ENCODE measurements at regions of chr2 and their contacts with region 1.

Region 1: DNA sequence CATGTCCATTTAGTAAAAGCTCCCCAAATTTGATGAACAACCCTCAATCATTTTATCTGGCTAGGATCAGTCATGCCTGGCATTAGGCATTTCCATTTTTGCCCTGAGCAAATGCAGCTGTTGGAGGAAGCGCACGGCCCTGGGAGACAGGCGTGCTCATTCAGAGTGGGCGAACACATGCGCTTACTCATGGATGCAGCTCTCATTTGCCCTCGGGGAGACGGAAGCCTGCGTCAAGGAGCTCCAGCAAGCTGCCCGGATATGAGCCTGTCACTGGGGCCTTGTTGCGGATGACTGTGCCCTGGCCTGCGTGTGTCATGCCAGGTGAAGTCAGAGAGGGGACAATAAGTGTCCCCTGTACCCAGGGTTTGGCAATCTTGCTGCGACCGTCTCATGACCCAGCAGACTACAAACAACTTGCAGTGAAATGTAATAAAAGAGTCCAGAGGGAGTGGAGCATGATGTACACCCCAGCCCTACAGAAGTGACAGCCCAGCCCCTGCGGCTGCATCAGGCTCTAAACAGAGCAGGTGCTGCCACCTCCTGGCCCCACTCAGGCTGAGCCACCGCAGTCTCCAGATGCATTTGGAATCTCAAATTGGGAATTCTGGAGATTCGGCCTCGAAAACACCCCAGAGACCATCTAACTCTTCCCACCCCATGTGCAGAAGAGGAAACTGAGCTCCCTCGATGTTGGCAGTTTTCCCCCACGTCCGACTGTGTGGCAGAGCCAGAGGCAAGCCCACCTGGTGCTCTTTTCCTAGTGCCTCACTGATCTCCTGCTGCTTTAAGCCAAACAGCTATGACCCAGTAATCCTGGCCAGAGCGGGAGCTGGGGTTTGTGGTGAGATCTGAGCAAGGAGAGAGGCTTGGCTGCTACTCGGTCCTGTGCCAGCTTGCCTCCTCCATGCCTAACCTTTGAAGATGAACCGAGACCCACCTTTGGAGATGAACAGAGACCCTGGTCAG is 105.0 kb upstream of the ALK start:
- DNase-seq: peak; percentile 84
- H3K4me3 ChIP-seq: no peak overlapping the region
- H3K27ac ChIP-seq: no peak overlapping the region
- H3K4me1 ChIP-seq: peaks cover 45% of the 10 kb centered on the region
- H3K27me3 ChIP-seq: no peaks in the 10 kb centered on the region
- CTCF ChIP-seq: peak; percentile 92

Region 2: DNA sequence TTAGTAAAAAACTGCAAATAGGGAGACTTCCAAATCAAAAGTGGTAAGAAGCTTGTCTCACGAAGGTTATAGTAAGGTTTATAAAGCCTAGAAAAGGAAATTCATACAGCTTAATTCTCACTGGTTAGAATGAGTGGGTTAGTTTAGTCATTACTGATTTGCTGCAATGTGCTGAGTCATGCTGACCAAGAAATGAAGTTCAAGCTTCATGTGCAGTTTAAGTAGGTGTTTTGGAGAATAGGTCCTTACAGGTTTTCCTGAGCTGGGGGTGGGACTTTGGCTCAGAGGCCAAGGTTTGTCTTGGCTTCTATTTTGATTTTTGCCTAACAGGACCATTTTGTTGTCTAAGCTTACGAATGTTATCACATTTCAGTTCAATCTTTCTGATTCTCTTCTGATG is 896.1 kb before region 1 on chr2:
- CTCF ChIA-PET with region 1: no interaction called
- POLR2A ChIA-PET with region 1: no interaction called
- intact Hi-C with region 1: no loop called
- DNase-seq: peak; percentile 43
- H3K4me3 ChIP-seq: no peak overlapping the region
- H3K27ac ChIP-seq: peak overlapping the region; percentile 33
- H3K4me1 ChIP-seq: peaks cover 16% of the 10 kb centered on the region
- H3K27me3 ChIP-seq: no peaks in the 10 kb centered on the region
- CTCF ChIP-seq: no peak

Region 3: DNA sequence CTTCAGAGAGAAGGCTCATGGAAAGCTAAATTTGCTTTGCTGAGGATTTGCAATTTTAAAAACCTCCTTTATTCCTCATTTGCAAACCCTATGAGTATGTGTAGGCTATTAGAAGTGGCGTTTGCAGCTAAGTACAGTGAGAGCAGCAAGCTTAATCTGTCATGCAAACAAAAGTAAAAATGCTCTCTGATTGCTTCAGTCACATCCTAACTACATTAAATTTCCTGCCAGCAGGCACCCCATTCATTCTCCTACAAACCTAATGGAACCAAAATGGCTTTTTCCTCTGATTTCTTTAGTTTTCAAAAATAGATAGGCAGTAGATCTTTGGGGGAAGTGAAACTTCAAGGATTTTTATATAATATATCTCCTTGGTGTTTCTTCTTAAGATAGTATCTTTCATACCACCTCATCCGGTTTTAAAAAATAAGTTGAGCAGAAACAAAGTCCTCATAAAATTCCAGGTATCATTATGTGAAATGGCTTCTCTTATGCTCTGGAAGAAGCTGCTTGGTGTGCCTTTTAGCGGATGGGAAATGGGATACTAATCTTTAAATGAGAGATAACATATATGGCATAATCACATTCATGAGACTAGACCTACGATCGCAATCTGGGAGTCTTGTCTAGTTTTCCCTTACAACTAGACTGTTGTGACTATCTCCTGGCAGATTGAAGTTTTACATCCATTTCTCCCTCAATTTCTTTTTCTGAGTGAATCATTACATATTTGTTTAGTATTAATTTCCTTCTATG is 862.1 kb before region 1 on chr2:
- CTCF ChIA-PET with region 1: no interaction called
- POLR2A ChIA-PET with region 1: no interaction called
- intact Hi-C with region 1: loop called (anchors 5 kb)
- DNase-seq: peak; percentile 79
- H3K4me3 ChIP-seq: no peak overlapping the region
- H3K27ac ChIP-seq: peak overlapping the region; percentile 39
- H3K4me1 ChIP-seq: peaks cover 44% of the 10 kb centered on the region
- H3K27me3 ChIP-seq: no peaks in the 10 kb centered on the region
- CTCF ChIP-seq: no peak

Region 4: GRCh38 chr2:29295857-29296256 is 730.5 kb before region 1 on chr2:
- CTCF ChIA-PET with region 1: no interaction called
- POLR2A ChIA-PET with region 1: no interaction called
- intact Hi-C with region 1: loop called (anchors 10 kb)
- DNase-seq: peak; percentile 61
- H3K4me3 ChIP-seq: no peak overlapping the region
- H3K27ac ChIP-seq: no peak overlapping the region
- H3K4me1 ChIP-seq: no peaks in the 10 kb centered on the region
- H3K27me3 ChIP-seq: no peaks in the 10 kb centered on the region
- CTCF ChIP-seq: peak; percentile 67

Region 5: DNA sequence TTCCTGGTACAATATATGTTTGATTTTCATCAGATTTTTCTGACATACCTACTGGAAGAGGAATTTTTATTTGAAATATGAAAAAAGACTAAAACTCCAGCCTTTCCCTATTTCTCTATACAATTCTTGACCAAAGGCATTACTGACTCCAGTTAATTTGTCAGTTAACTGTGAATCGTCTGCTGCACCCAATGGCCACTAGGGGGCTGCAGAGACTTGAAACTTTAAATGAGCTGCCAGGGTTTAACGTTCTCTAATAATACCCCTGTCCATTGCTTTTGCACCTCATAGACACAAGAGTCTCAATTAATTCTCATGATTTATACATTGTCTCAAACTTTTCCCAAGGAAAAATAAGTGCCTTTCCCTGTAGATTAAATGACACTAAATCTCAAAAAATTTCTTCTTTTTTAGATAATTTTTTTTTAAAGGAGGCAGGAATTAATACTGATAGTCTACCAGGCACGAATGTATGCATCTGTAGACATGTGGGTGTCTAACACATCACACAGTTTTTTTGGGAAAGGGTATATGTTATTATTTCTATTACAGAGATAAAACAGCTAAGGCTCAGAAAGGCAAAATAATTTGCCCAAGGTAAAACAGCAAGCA is 103.2 kb before region 1 on chr2:
- CTCF ChIA-PET with region 1: interaction called, 7 read pairs
- POLR2A ChIA-PET with region 1: no interaction called
- intact Hi-C with region 1: loop called (anchors 2 kb)
- DNase-seq: peak; percentile 86
- H3K4me3 ChIP-seq: no peak overlapping the region
- H3K27ac ChIP-seq: no peak overlapping the region
- H3K4me1 ChIP-seq: peaks cover 10% of the 10 kb centered on the region
- H3K27me3 ChIP-seq: no peaks in the 10 kb centered on the region
- CTCF ChIP-seq: peak; percentile 98

Region 6: DNA sequence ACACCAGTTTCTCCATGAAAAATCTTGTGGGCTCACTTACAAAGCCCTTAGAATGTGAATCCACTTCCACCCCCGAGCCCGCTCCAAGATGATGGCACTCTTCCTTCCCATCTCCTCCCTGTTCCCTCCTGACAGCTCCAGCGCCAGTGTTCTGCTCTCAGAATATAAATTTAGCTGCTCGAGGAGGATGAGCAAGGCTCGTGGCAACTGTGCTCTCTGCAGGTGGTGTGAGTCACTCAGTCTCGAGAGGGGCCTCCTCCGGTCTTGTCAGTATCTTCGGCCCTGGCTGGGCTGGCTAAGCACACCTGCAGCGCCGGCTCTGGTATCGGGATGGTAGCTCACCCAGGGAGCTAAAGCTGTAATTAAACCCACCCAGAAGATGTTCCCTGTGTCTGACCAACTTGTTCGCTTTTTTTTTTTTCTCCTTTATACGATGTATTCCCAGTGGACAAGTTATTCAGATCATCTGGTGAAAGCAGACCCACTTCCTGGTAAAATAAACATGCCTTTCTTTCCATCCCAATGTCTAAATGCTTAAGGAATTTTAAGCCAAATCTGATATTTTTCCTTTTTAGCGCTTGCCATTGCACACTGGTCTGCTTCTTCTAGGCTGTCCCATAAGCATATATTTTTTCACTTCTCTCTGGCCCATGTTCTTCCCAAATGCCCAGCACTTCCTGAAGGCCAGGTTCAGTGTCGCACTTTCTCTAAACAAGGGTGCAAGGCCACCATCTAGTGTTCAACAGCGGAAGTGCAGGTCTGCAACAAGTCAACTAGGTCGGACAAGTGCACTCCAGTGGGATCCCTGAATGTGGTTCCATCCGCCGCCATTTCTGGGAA is 89.0 kb after region 1 on chr2:
- CTCF ChIA-PET with region 1: interaction called, 3 read pairs
- POLR2A ChIA-PET with region 1: no interaction called
- intact Hi-C with region 1: loop called (anchors 5 kb)
- DNase-seq: peak; percentile 93
- H3K4me3 ChIP-seq: peak overlapping the region; percentile 3
- H3K27ac ChIP-seq: peak overlapping the region; percentile 72
- H3K4me1 ChIP-seq: peaks cover 30% of the 10 kb centered on the region
- H3K27me3 ChIP-seq: no peaks in the 10 kb centered on the region
- CTCF ChIP-seq: peak; percentile 97